Dorsolateral prefrontal cortex (tissue), 120 donors: ENCODE measurements at regions of chr2 and their contacts with region 1.

Region 1: DNA sequence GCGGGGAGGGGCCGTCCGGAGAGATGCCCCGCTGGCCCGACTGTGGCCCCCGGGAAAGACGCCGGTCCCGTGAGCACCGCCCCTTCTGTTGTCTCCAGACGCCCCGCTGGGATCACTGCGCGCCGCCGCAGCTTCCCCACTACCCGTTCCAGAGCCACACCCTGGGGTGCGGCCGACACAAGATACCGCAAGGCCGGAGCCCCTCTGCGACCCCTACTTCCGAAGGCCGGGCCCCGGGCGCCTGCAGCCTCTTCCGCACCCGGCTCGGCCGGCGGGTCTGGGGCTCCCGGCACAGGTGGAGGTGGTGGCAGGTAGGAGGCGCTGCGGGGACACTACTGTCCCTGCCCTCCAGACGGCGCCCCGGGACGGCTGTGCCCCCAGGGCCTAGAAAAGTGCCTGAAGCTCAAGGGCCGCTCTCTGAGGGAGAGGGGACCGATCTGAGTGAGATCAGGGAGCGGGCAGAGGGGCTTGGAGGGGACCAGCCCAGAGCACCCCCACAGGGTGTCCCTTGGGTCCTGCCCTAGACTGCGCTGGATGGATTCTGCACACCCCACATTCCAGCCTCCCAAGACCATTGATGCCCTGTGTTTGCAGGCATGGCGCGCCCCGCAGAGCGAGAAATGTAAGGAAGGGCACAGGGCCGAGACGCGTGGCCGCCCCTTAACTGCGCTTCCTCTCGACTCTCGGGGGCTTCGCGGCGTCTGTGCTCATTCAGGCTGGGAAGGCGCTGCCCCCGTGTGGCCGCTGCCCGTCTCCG is 80.0 kb downstream of the GFPT1 start:
- DNase-seq: peak in 9 of 10 donors; percentile 51 to 81 (median 74)
- H3K4me3 ChIP-seq: peak overlapping the region; percentile 39 to 75 (median 58)
- H3K27ac ChIP-seq: peak overlapping the region in 25 of 59 donors; percentile 0 to 75 (median 39)
- H3K27me3 ChIP-seq: peaks cover 0 to 18% (median 0%) of the 10 kb centered on the region in 45 donors
- CTCF ChIP-seq: peak in 54 of 56 donors; percentile 54 to 92 (median 79)

Region 2: GRCh38 chr2:68943581-68944568 is 363.1 kb before region 1 on chr2:
- intact Hi-C with region 1: loop called (anchors 5 to 10 kb)
- DNase-seq: peak in 5 of 10 donors; percentile 29 to 52 (median 43)
- H3K4me3 ChIP-seq: peak overlapping the region in 1 of 59 donors; percentile 3
- H3K27ac ChIP-seq: no peak overlapping the region
- H3K27me3 ChIP-seq: peaks cover 0 to 5% (median 0%) of the 10 kb centered on the region in 45 donors
- CTCF ChIP-seq: peak; percentile 61 to 88 (median 80)

Region 3: DNA sequence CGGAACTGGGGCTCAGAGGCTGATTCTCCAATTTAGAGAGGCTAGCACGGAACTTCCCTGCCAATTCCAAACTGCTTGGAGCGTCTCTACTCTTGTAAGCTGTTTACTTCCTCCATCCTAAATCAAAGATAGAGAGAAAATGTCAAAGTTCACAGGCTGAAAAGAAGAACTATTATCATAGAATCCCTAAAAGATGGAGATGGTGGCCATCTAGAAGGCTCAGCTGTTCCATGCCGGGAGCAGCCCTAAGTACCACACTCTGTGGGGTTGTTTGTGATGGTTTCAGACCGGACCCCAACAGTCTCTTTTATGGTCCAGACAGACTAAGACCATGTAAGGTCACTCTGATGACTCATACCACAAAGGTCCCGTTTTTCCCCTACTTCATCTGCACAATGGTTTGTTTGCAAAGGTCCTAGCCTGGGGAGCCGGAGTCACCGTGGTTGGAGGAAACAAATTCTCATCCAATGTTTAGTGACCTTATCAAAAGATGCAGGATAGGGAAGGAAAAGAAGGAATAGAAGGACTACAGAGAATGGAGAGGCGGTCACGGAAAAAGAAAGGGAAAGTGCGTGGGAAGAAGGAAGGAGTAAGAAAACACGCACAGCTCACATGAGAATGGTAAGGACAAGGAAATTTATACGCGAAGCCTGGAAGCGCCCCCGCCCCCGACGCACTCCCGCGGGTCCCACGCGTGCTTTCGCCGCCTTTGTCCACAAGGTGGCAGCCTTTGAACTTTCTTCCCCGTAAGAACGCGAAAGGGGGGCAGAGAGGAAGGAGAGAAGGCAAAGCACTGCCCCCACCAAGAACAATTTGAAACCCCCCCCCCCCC is 294.5 kb before region 1 on chr2:
- intact Hi-C with region 1: loop called (anchors 1 to 5 kb)
- DNase-seq: peak; percentile 49 to 80 (median 66)
- H3K4me3 ChIP-seq: peak overlapping the region; percentile 51 to 92 (median 79)
- H3K27ac ChIP-seq: peak overlapping the region in 14 of 59 donors; percentile 11 to 85 (median 67)
- H3K27me3 ChIP-seq: peaks cover 0 to 26% (median 0%) of the 10 kb centered on the region in 45 donors
- CTCF ChIP-seq: peak in 55 of 56 donors; percentile 59 to 83 (median 77)

Region 4: GRCh38 chr2:69026026-69026425 is 281.0 kb before region 1 on chr2:
- intact Hi-C with region 1: loop called in 1 of 2 experiments (anchors 5 kb)
- DNase-seq: no peak
- H3K4me3 ChIP-seq: no peak overlapping the region
- H3K27ac ChIP-seq: no peak overlapping the region
- H3K27me3 ChIP-seq: no peaks in the 10 kb centered on the region
- CTCF ChIP-seq: peak in 51 of 56 donors; percentile 19 to 70 (median 44)